Gastrocnemius medialis (tissue), 4 donors: ENCODE measurements at regions of chr11 and their contacts with region 1.

Region 1: GRCh38 chr11:65117216-65118096 is at the start of gene ZNHIT2:
- DNase-seq: peak; percentile 99
- ATAC-seq: peak; percentile 83 to 85
- H3K4me3 ChIP-seq: peak within 1 kb of the TSS; percentile 85 to 99 (median 98)
- H3K27ac ChIP-seq: peak within 1 kb of the TSS; percentile 80 to 94 (median 88)
- H3K4me1 ChIP-seq: peaks cover 30 to 50% of the 10 kb centered on the region in 2 donors
- H3K27me3 ChIP-seq: no peaks in the 10 kb centered on the region
- CTCF ChIP-seq: peak; percentile 90 to 99 (median 96)
- POLR2A ChIP-seq: peak; percentile 47 to 57
- total RNA-seq, gene ZNHIT2: 10.3 to 30.7 (median 24.1) TPM

Region 2: DNA sequence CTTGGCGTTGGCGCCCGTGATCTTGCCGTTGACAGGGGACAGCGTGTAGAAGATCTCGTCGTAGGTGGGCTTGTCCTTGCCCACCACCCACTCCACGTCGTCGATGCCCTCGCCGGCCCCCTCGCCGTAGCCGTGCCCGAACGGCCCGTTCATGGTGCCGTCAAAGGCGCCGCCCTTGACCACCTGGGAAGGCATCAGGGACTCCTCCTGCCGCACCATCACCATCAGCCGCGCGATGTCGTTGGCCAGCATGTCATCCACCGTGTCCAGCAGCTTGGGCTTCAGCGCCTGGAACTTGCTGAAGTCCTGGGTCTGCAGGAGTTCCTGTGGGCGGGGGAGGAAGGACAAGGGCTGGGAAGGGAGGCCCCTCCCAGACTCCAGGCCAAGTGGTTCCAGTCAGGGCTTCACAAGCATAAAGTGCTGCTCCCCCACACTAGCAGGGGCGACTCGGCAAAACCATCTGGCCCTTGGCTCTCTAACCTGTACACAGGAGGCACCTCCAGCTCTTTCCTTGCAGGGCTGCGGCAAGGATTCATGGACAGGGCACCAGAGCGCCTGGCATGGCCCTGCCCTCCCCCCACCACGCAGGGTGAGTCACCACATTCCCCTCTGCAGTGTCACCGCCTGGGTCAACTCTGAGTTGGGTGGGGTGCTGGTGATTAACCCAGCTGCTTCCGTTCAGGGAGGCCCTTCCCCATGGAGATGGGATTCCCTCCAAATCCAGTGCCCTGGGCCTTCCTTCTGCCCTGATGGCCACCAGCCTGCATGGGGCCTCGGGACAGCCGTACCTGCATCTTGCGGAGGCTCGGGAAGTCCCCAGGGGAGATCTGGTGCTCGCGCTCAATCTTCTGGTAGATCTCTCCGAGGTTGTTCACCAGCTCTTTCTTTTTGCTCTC is 262.7 kb before region 1 on chr11:
- in situ Hi-C with region 1: no loop called
- intact Hi-C with region 1: loop called (anchors 10 kb)
- DNase-seq: peak; percentile 72 to 94
- ATAC-seq: peak; percentile 49 to 53
- H3K4me3 ChIP-seq: peak overlapping the region in 2 of 4 donors; percentile 7 to 19
- H3K27ac ChIP-seq: peak overlapping the region; percentile 90 to 94 (median 92)
- H3K4me1 ChIP-seq: peaks cover 86 to 96% of the 10 kb centered on the region in 2 donors
- H3K27me3 ChIP-seq: no peaks in the 10 kb centered on the region
- CTCF ChIP-seq: no peak
- POLR2A ChIP-seq: peak in 1 of 2 donors; percentile 14

Region 3: DNA sequence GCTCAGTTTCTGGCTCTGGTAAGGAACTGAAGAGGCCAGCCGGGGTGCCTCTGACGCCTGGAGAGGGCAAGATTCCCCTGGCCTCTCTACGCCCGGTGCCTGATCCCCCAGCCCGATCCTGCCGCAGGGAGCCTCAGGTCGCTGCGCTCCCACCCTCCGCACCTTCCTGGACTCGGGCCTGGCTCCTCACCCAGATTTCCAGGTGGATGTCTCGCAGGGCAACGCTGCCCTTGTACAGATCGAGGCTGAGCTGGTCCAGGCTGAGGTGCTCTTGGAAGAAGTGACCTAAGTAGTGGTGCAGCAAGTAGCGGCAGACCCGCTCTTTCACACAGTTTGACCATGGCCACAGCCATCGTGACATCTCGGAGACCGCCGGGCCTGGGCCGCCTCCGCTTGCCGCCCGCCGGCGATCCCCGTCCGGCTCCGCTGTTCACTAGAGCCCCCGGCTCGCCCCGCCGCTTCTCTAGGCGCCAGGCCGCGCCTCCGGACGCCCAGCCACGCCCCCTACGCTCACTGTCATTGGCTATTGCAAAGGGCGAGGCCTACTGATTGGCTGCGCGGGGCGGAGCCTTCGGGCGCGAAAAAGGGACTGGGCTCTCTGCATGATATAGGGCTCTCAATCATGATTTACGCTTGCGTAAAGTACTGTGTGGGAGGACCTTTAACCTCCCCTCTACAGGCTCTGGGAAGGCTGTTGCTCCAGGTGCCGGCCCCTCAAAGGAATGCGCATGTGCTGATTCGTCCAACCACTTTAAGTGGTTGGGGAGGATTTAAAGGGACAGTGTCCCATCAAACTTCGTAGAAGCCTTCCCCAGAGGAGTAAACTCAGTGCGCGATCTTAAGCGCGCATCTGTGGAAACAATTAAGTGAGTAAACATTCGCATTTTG is 200.4 kb before region 1 on chr11 and contains the start of gene ATG2A:
- in situ Hi-C with region 1: no loop called
- intact Hi-C with region 1: loop called (anchors 2 kb)
- DNase-seq: peak; percentile 98 to 99
- ATAC-seq: peak; percentile 99
- H3K4me3 ChIP-seq: peak within 1 kb of the TSS; percentile 80 to 91 (median 90)
- H3K27ac ChIP-seq: peak within 1 kb of the TSS; percentile 84 to 88 (median 86)
- H3K4me1 ChIP-seq: peaks cover 24 to 27% of the 10 kb centered on the region in 2 donors
- H3K27me3 ChIP-seq: no peaks in the 10 kb centered on the region
- CTCF ChIP-seq: no peak
- POLR2A ChIP-seq: peak; percentile 87 to 88
- total RNA-seq, gene ATG2A: 10.7 to 97.5 (median 37.9) TPM

Region 4: GRCh38 chr11:65083834-65084597 is 33.4 kb before region 1 on chr11 and contains the starts of genes CDCA5 and ZFPL1:
- in situ Hi-C with region 1: no loop called
- intact Hi-C with region 1: loop called (anchors 1 kb)
- DNase-seq: peak; percentile 90 to 93
- ATAC-seq: peak; percentile 98 to 99
- H3K4me3 ChIP-seq: peak within 1 kb of the TSS; percentile 71 to 95 (median 81)
- H3K27ac ChIP-seq: peak within 1 kb of the TSS; percentile 90 to 98 (median 91)
- H3K4me1 ChIP-seq: peaks cover 12 to 18% of the 10 kb centered on the region in 2 donors
- H3K27me3 ChIP-seq: no peaks in the 10 kb centered on the region
- CTCF ChIP-seq: peak in 1 of 5 experiments; percentile 4
- POLR2A ChIP-seq: peak; percentile 12 to 52
- total RNA-seq, gene CDCA5: 0.36 to 1.3 (median 1.00) TPM in 3 of 4 donors, not detected in the other
- total RNA-seq, gene ZFPL1: 35.7 to 42.0 (median 40.6) TPM

Region 5: DNA sequence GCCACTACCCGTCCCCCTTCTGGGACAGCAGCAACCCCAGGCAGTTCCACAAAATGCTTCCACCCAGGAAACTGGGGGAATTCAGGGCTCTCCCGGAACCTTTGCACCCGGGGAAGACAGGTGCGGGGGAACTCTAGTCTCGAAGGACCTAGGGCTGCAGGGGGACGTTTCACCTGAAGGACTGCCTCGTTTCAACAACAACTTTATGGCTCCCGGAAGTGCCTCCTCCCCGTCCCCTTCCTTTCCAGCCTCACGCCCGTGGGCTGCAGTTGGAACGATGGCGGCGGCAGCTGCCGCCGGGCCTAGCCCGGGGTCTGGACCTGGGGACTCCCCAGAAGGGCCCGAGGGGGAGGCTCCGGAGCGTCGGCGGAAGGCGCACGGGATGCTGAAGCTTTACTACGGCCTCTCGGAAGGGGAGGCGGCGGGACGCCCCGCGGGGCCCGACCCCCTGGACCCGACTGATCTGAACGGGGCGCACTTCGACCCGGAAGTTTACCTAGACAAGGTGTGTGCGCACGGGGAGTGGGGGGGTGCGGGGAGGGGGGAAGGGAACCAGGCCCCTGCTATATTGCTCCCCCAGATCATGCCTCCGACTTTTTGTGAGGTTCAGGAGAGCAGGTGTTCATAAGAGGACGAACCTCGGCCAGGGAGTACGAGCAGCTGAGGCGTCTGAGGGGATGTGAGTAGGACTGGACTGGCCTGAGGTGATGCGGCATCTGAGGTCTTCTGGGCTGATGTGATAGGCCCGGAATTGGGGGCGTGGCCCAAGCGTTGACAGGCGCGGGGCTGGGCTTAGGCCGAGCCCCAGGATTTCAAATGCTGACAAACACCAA is 21.3 kb before region 1 on chr11 and contains the start of gene VPS51:
- in situ Hi-C with region 1: no loop called
- intact Hi-C with region 1: loop called (anchors 2 kb)
- DNase-seq: peak; percentile 81 to 88
- ATAC-seq: peak; percentile 93 to 96
- H3K4me3 ChIP-seq: peak within 1 kb of the TSS; percentile 88 to 96 (median 89)
- H3K27ac ChIP-seq: peak within 1 kb of the TSS; percentile 91 to 97 (median 93)
- H3K4me1 ChIP-seq: peaks cover 34 to 36% of the 10 kb centered on the region in 2 donors
- H3K27me3 ChIP-seq: no peaks in the 10 kb centered on the region
- CTCF ChIP-seq: peak in 3 of 5 experiments; percentile 12 to 48 (median 32)
- POLR2A ChIP-seq: peak; percentile 47 to 72
- total RNA-seq, gene VPS51: 206 to 515 (median 266) TPM

Region 6: DNA sequence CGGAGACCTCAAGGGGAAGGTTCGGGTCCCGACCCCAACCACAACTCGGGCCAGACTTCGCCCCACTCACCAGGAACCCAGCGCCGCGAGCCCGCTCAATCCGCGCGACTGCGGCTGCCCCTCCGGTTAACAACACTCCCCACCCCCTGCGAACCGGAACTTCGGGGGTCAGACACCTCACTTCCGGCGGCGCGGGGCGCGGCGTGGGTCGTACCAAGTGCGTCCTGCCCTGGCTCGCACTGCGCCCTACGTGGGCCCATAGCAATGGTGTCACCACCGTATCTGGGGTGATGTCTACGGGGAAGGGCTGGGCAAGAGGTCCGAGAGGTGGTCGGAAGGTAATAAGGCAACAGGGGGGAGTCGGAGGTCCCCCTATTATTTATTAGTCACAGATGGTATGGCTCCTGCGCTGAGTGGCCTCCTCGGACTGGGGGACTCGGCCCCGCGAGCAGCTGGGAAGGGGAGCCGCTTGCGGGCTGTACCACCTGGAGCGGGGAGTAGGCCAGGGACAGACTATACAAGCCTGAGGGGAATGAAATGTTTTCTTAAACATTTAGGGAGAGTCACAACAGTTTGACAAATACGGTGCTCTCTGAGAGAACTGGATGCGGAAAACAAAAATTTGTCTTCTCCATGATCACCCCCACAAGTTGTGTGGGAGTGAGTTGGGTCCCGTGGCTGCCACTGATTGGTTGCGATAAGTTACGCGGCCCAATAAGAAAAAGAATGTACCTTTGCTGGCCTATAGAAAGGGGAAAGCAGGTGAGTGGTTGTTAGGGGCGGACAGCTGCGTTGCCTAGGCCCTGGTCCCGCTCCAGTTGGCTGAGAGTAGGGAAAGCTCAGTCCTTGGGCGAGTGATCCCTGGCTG is 17.2 kb after region 1 on chr11 and contains the start of gene SYVN1:
- in situ Hi-C with region 1: no loop called
- intact Hi-C with region 1: loop called (anchors 1 kb)
- DNase-seq: peak; percentile 96 to 99
- ATAC-seq: peak; percentile 95 to 97
- H3K4me3 ChIP-seq: peak within 1 kb of the TSS; percentile 84 to 99 (median 92)
- H3K27ac ChIP-seq: peak within 1 kb of the TSS; percentile 87 to 99 (median 98)
- H3K4me1 ChIP-seq: peaks cover 27 to 29% of the 10 kb centered on the region in 2 donors
- H3K27me3 ChIP-seq: no peaks in the 10 kb centered on the region
- CTCF ChIP-seq: peak in 1 of 5 experiments; percentile 24
- POLR2A ChIP-seq: peak; percentile 97 to 98
- total RNA-seq, gene SYVN1: 24.6 to 77.5 (median 37.3) TPM